ENCODE measurements at regions of chr7 and their contacts with region 1.

Region 1: GRCh38 chr7:139494835-139495579 is 11.5 kb upstream of the KLRG2 start:
- DNase-seq: no peak
- H3K4me3 ChIP-seq: no peak overlapping the region
- H3K4me1 ChIP-seq: no peaks in the 10 kb centered on the region
- H3K27me3 ChIP-seq: no peaks in the 10 kb centered on the region

Region 2: DNA sequence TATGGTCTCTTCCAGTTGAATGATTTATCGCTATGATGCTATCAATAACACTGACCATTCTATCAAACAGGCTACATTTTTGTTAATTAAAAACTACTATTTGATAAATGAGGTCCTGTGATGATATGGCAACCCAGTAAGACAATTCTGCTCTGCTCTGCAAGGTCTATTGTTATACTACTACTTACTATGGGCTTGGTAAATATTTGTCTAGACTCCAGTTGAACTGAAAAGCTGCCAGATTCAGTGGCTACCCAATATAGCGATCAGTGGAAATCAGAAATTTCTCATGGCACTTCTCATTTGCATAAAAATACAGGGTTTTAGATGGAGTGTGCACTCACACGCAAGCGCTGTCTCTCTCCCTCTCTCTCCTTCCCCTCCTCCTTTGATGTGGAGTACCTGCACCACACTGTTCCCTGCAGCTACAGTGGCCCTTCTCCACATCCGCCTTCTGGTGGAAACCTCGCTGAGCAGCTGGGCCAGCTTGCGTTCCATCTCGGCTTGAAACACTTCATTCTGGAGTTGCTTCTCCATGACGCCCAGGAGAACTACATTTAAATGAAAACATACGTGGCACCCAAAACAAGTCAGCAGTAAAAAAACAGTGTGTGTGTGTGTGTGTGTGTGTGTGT is 591.7 kb before region 1 on chr7:
- in situ Hi-C with region 1: no loop called
- DNase-seq: peak; percentile 18 to 32
- H3K4me3 ChIP-seq: no peak overlapping the region
- H3K4me1 ChIP-seq: 0 out of 2 replicates have a peak, but pooled peaks cover 5% of the 10 kb centered on the region
- H3K27me3 ChIP-seq: no peaks in the 10 kb centered on the region

Region 3: DNA sequence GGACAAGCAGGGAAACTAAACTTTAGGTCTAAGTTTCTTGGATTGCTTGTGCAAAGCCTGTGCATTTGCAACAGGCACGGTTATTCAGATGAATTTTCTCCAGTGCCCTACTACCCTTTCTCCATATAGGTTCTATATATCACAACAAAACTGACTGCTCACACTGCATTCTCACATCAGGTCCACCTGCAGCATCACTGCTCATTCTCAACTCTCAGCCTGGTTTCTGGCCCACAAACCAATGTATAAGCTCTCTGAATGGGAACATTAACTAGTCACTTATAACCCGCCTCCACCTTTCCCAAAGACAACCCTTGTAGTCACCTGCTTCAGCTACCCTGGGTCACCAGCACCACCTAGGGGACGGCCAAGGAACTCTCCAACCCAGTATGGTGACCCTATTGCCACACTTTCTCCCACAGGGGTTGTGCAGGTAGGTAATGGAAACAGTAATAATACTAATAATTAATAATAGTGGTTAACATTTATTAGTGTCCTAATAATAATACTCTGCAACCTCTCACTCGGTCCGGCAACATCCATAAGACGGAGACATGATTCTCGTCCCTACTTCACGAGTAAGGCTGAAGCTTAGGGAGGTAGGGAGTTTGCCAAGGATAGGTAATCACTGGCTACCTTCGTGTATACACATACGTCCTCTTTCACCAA is 125.8 kb after region 1 on chr7:
- in situ Hi-C with region 1: loop called (anchors 10 kb)
- DNase-seq: peak; percentile 44 to 84
- H3K4me3 ChIP-seq: no peak overlapping the region
- H3K4me1 ChIP-seq: no peaks in the 10 kb centered on the region
- H3K27me3 ChIP-seq: no peaks in the 10 kb centered on the region

Measured in HAP-1 (cell line).